A673 (cell line): ENCODE measurements at regions of chr19 and their contacts with region 1.

Region 1: DNA sequence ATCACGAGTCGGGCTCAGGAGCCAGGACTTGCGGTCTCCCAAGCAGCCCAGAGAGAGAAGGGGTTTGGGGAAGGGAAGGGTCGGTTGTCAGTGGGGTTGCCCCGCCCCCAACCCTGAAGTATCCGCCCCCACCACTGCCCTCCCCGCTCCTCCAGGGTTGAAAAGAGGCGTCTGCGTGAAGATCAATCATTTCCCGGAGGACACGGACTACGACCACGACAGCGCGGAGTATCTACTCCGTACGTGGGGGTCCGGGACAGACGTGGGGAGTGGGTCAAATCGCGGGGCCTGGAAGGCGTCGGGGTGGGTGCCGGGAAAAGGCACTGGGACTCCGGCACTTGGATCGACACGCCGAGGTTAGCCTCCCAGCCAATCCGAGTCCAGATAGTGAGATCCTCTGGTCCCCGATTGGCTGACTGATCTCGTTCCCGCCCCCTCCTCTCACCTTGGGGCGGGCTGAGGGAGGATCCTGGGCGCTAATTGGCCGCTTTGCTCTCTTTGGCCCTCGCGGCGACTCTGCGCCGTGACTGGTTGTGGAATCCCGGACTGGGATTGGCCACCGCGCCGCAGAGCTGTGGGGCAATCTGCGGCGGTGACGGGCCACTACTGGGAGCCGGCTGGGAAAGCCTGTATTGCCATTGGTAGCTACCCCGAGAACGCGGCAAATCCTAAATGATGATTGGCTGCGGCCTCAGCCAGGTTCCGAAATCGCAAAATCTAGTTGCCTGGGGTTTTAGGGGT is 13.3 kb upstream of the CACNG6 start:
- DNase-seq: peak; percentile 96
- H3K4me3 ChIP-seq: peak overlapping the region; percentile 35
- H3K27ac ChIP-seq: peak overlapping the region; percentile 61
- H3K4me1 ChIP-seq: peaks cover 23% of the 10 kb centered on the region
- H3K27me3 ChIP-seq: no peaks in the 10 kb centered on the region
- CTCF ChIP-seq: no peak

Region 2: DNA sequence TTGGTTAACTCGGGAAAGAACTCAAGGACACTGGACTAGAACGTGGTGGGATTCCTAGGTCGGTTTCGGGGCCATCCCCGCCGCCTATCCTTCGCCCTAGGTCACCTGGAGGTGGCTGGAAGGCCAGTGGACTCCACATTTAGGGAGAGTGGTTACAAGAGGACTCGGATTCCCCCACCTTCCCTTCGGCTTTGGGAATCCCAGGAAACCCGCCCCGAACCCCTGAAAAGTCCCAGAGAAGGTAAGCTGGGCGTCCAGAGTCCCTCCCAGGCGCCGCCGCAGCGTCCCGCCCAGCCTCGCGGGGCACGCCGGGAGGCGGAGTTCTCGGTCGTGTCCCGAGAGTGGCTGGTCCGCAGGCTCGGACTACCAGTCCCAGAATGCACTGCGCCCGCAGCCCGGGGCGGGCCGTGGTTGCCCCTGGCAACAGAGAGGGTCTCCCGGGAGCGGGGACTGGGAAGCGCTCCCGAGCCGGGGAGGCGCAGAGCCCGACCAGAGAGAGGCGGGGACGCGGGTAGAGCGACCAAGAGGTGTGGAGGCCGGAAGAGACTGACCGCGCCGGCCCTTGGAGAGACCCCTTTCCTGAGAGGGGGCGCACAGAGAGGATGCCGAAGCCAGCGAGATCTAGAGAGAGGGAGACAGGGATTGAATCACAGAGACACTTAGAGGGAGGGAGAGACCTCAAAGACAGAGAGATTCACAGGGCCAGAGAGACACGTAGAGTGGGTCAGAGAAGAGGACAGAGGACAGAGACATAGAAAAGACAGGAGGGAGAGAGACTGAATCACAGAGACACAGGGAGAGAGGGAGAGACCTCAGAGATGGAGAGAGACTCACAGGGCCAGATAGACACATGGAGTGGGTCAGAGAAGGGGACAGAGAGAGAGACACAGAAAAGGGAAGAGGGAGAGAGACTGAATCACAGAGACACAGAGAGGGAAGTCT is 98.8 kb before region 1 on chr19:
- CTCF ChIA-PET with region 1: no interaction called
- POLR2A ChIA-PET with region 1: no interaction called
- intact Hi-C with region 1: no loop called
- DNase-seq: peak; percentile 97
- H3K4me3 ChIP-seq: peak overlapping the region; percentile 51
- H3K27ac ChIP-seq: peak overlapping the region; percentile 60
- H3K4me1 ChIP-seq: peaks cover 28% of the 10 kb centered on the region
- H3K27me3 ChIP-seq: peaks cover 22% of the 10 kb centered on the region
- CTCF ChIP-seq: no peak

Region 3: DNA sequence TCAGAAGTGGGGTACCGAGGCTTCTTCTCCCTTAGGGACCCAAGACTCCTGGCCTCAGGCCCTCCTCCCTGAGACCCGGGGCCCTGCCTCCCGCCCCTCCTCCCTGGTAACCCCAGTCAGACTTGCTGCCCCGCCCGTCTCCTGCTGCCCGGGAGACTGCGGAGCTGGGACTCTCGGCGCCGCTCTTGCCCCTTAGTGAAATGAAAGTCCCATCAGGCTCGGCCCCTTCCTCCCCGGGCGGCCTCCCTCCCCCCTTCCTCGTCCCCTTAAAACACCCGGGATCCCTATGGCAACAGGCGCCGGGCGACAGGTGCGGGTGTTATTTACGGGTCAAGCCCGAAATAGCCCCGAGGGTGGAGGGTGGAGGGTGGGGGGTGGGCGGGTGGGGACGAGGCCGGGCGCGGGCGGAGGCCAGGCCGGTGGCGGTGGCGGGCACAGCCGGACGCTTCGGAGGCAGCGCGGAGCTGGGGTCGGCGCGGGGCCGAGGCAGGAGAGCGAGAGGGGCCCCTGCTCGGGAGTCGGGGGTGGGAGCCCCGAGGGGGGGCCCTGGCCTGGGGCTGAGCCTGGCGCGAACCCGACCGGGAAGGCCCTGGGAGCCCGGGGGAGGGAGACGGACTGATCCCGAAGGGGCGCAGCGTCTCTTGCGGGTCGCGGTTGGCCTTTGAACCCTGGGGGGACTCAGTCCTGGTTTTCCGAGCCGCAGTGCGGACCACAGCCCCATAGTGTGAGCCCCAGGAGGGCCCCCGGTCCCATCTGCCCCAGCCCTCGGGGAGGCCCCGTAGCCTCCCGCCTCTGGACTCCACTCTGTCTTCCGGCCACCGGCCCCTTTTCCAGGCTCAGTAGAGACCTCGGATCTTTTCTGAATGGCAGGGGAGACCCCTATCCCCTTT is 13.3 kb after region 1 on chr19 and contains the start of gene CACNG6:
- CTCF ChIA-PET with region 1: interaction called, 11 read pairs
- POLR2A ChIA-PET with region 1: no interaction called
- intact Hi-C with region 1: no loop called
- DNase-seq: no peak
- H3K4me3 ChIP-seq: peak within 1 kb of the TSS; percentile 40
- H3K27ac ChIP-seq: no peak within 1 kb of the TSS
- H3K4me1 ChIP-seq: no peaks in the 10 kb centered on the region
- H3K27me3 ChIP-seq: no peaks in the 10 kb centered on the region
- CTCF ChIP-seq: no peak
- total RNA-seq, gene CACNG6: 0.50 TPM in 1 of 2 replicates, not detected in the other